ENCODE measurements at regions of chr10 and their contacts with region 1.

Region 1: GRCh38 chr10:11611248-11612020 is at the start of gene USP6NL:
- DNase-seq: no peak
- ATAC-seq: peak; percentile 54
- H3K4me3 ChIP-seq: peak within 1 kb of the TSS; percentile 98
- H3K27ac ChIP-seq: peak within 1 kb of the TSS; percentile 91
- H3K4me1 ChIP-seq: peaks cover 10% of the 10 kb centered on the region
- H3K27me3 ChIP-seq: no peaks in the 10 kb centered on the region
- CTCF ChIP-seq: no peak
- EP300 ChIP-seq: peak in 1 of 2 experiments; percentile 36; a peak in 1 of 4 replicates
- POLR2A ChIP-seq: peak; percentile 74
- RAD21 ChIP-seq: no peak
- polyA plus RNA-seq, gene USP6NL: 4.0 to 6.5 TPM

Region 2: GRCh38 chr10:11515596-11516430 is 95.6 kb before region 1 on chr10:
- CTCF ChIA-PET with region 1: interaction called, 10 read pairs
- POLR2A ChIA-PET with region 1: no interaction called
- RAD21 ChIA-PET with region 1: interaction called, 8 read pairs
- SMC1A ChIA-PET with region 1: interaction called, 20 read pairs
- in situ Hi-C with region 1: no loop called
- intact Hi-C with region 1: no loop called
- DNase-seq: peak; percentile 67
- ATAC-seq: peak; percentile 86
- H3K4me3 ChIP-seq: peak overlapping the region; percentile 38; the same call in 1 of the 2 replicates
- H3K27ac ChIP-seq: peak overlapping the region; percentile 80
- H3K4me1 ChIP-seq: peaks cover 24% of the 10 kb centered on the region
- H3K27me3 ChIP-seq: no peaks in the 10 kb centered on the region
- CTCF ChIP-seq: peak; percentile 85 to 93 (median 88); a peak in 5 of 6 replicates
- EP300 ChIP-seq: no peak
- POLR2A ChIP-seq: no peak
- RAD21 ChIP-seq: peak; percentile 97

Region 3: DNA sequence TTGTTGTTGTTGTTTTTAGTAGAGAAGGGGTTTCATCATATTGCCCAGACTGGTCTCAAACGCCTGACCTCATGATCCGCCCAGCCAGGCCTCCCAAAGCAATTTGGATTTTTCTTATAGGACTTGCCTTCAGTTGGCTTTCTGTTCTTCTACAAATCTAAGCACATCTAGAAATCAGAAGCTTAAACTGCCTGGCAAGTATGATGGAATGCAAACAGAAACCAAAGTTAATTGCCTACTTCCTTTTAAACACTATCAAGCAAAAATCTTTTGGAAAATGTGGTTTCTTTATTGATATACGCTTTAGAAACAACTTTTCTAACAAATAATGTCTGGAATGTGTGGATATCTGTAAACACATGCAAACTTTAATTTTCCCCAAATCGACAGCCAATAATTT is 64.9 kb before region 1 on chr10:
- CTCF ChIA-PET with region 1: interaction called, 10 read pairs
- POLR2A ChIA-PET with region 1: interaction called, 3 read pairs
- RAD21 ChIA-PET with region 1: interaction called, 14 read pairs
- SMC1A ChIA-PET with region 1: interaction called, 11 read pairs
- in situ Hi-C with region 1: no loop called
- intact Hi-C with region 1: no loop called
- DNase-seq: no peak
- ATAC-seq: no peak
- H3K4me3 ChIP-seq: no peak overlapping the region
- H3K27ac ChIP-seq: no peak overlapping the region
- H3K4me1 ChIP-seq: peaks cover 22% of the 10 kb centered on the region
- H3K27me3 ChIP-seq: no peaks in the 10 kb centered on the region
- CTCF ChIP-seq: no peak
- EP300 ChIP-seq: no peak
- POLR2A ChIP-seq: no peak
- RAD21 ChIP-seq: no peak

Region 4: GRCh38 chr10:11578802-11579255 is 32.6 kb before region 1 on chr10:
- CTCF ChIA-PET with region 1: interaction called, 4 read pairs
- POLR2A ChIA-PET with region 1: interaction called, 3 read pairs
- RAD21 ChIA-PET with region 1: interaction called, 32 read pairs
- SMC1A ChIA-PET with region 1: interaction called, 27 read pairs
- in situ Hi-C with region 1: no loop called
- intact Hi-C with region 1: no loop called
- DNase-seq: peak; percentile 73
- ATAC-seq: peak; percentile 86
- H3K4me3 ChIP-seq: 0 out of 2 replicates have a peak overlapping the region, but pooled peaks have one; percentile 26
- H3K27ac ChIP-seq: peak overlapping the region; percentile 32
- H3K4me1 ChIP-seq: peaks cover 35% of the 10 kb centered on the region
- H3K27me3 ChIP-seq: no peaks in the 10 kb centered on the region
- CTCF ChIP-seq: no peak
- EP300 ChIP-seq: peak in 1 of 2 experiments; percentile 22; a peak in 1 of 4 replicates
- POLR2A ChIP-seq: no peak
- RAD21 ChIP-seq: peak; percentile 26; the same call in 1 of the 2 replicates

Region 5: DNA sequence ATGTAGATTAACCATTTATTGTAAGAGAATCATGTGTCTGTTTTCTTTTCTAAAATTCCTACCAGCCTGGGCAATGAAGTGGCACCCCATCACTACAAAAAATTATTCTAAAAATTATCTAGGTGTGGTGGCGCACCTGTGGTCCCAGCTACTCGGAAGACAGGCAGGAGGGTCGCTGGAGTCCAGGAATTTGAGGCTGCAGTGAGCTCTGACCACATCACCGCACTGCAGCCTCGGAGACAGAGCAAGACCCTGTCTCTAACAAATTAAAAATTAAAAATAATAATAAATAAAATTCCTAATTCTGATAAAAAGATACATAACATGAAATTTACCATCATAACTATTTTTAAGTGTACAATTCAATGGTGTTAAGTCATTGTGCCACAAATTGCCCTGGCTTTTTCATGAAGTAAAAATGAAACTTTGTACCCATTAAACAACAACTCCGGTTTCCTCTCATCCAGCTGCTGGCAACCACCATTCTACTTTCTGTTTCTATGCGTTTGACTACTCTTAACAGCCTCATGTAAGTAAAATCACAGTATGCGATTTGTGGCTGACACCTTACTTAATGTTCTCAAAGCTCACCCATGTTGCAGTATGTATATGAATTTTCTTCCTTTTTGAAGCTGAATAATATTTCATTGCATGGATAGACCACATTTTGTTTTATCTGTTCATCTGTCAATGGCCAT is 20.6 kb after region 1 on chr10:
- CTCF ChIA-PET with region 1: interaction called, 5 read pairs
- POLR2A ChIA-PET with region 1: interaction called, 4 read pairs
- RAD21 ChIA-PET with region 1: interaction called, 4 read pairs
- SMC1A ChIA-PET with region 1: interaction called, 24 read pairs
- in situ Hi-C with region 1: no loop called
- intact Hi-C with region 1: no loop called
- DNase-seq: peak; percentile 88
- ATAC-seq: peak; percentile 100
- H3K4me3 ChIP-seq: no peak overlapping the region
- H3K27ac ChIP-seq: peak overlapping the region; percentile 25; the same call in 1 of the 2 replicates
- H3K4me1 ChIP-seq: peaks cover 13% of the 10 kb centered on the region
- H3K27me3 ChIP-seq: no peaks in the 10 kb centered on the region
- CTCF ChIP-seq: no peak
- EP300 ChIP-seq: peak; percentile 66 to 73; a peak in 3 of 4 replicates
- POLR2A ChIP-seq: no peak
- RAD21 ChIP-seq: no peak

Region 6: GRCh38 chr10:11698691-11699549 is 87.5 kb after region 1 on chr10:
- CTCF ChIA-PET with region 1: interaction called, 13 read pairs
- POLR2A ChIA-PET with region 1: interaction called, 4 read pairs
- RAD21 ChIA-PET with region 1: interaction called, 8 read pairs
- SMC1A ChIA-PET with region 1: interaction called, 23 read pairs
- in situ Hi-C with region 1: no loop called
- intact Hi-C with region 1: loop called (anchors 5 kb)
- DNase-seq: peak; percentile 77
- ATAC-seq: peak; percentile 83
- H3K4me3 ChIP-seq: no peak overlapping the region
- H3K27ac ChIP-seq: peak overlapping the region; percentile 86
- H3K4me1 ChIP-seq: peaks cover 28% of the 10 kb centered on the region
- H3K27me3 ChIP-seq: no peaks in the 10 kb centered on the region
- CTCF ChIP-seq: no peak
- EP300 ChIP-seq: peak in 1 of 2 experiments; percentile 88; a peak in 2 of 4 replicates
- POLR2A ChIP-seq: no peak
- RAD21 ChIP-seq: 0 out of 2 replicates have a peak, but pooled peaks have one; percentile 5